PC-3 (cell line): ENCODE measurements at regions of chr2 and their contacts with region 1.

Region 1: GRCh38 chr2:14492920-14493503 is 139.5 kb upstream of the LRATD1 start:
- DNase-seq: peak; percentile 97
- ATAC-seq: peak; percentile 96
- H3K4me3 ChIP-seq: peak overlapping the region; percentile 23; the same call in 1 of the 2 replicates
- H3K27ac ChIP-seq: peak overlapping the region; percentile 94
- H3K4me1 ChIP-seq: peaks cover 26% of the 10 kb centered on the region
- H3K27me3 ChIP-seq: no peaks in the 10 kb centered on the region
- CTCF ChIP-seq: no peak

Region 2: DNA sequence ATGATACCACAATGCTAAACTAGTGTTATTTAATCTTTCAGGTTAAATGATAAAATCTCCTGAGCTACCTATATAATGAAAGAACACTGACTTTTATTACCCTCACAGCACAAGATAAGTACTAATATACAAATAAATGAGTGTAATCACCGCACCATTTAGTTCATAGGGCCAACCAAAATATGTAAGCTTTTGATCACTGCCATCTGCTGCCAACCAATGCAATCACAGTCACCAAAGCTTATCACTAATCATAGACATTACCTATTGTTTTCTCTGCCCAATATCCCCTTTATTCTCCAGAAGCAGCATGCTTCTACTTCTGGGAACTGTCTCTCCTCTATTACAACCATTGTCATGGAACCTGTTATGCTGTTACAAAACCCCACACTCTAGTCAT is 12.1 kb before region 1 on chr2:
- CTCF ChIA-PET with region 1: no interaction called
- POLR2A ChIA-PET with region 1: no interaction called
- intact Hi-C with region 1: no loop called
- DNase-seq: no peak
- ATAC-seq: no peak
- H3K4me3 ChIP-seq: no peak overlapping the region
- H3K27ac ChIP-seq: no peak overlapping the region
- H3K4me1 ChIP-seq: no peaks in the 10 kb centered on the region
- H3K27me3 ChIP-seq: no peaks in the 10 kb centered on the region
- CTCF ChIP-seq: 0 out of 2 replicates have a peak, but pooled peaks have one; percentile 22

Region 3: DNA sequence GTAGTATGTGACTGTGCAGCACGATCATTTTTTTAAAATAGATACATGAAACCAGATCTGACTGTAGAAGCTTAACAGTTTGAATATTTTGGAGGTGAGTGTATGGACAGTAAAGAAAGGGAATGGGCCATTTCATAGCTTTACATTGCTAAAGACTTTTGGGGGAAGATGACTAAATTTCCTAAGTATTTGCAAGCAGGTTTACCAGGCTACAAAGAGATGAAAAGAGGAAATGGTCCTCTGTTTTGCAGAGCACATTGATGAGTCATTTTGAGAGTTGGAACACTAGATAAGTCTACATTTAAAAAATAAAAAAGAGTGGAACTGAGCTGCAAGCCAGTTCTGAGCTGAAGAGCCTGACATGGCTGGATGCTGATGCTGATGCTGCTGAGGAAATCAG is 23.8 kb after region 1 on chr2:
- CTCF ChIA-PET with region 1: no interaction called
- POLR2A ChIA-PET with region 1: interaction called, 3 read pairs
- intact Hi-C with region 1: loop called (anchors 1 kb)
- DNase-seq: peak; percentile 97
- ATAC-seq: peak; percentile 84
- H3K4me3 ChIP-seq: no peak overlapping the region
- H3K27ac ChIP-seq: peak overlapping the region; percentile 94
- H3K4me1 ChIP-seq: peaks cover 46% of the 10 kb centered on the region
- H3K27me3 ChIP-seq: no peaks in the 10 kb centered on the region
- CTCF ChIP-seq: no peak

Region 4: GRCh38 chr2:14524057-14524802 is 31.2 kb after region 1 on chr2:
- CTCF ChIA-PET with region 1: no interaction called
- POLR2A ChIA-PET with region 1: no interaction called
- intact Hi-C with region 1: loop called (anchors 2 kb)
- DNase-seq: peak; percentile 93
- ATAC-seq: peak; percentile 94
- H3K4me3 ChIP-seq: peak overlapping the region; percentile 29; the same call in 1 of the 2 replicates
- H3K27ac ChIP-seq: peak overlapping the region; percentile 95
- H3K4me1 ChIP-seq: peaks cover 45% of the 10 kb centered on the region
- H3K27me3 ChIP-seq: no peaks in the 10 kb centered on the region
- CTCF ChIP-seq: peak; percentile 18; the same call in 1 of the 2 replicates